ENCODE measurements at regions of chr1 and their contacts with region 1.

Region 1: DNA sequence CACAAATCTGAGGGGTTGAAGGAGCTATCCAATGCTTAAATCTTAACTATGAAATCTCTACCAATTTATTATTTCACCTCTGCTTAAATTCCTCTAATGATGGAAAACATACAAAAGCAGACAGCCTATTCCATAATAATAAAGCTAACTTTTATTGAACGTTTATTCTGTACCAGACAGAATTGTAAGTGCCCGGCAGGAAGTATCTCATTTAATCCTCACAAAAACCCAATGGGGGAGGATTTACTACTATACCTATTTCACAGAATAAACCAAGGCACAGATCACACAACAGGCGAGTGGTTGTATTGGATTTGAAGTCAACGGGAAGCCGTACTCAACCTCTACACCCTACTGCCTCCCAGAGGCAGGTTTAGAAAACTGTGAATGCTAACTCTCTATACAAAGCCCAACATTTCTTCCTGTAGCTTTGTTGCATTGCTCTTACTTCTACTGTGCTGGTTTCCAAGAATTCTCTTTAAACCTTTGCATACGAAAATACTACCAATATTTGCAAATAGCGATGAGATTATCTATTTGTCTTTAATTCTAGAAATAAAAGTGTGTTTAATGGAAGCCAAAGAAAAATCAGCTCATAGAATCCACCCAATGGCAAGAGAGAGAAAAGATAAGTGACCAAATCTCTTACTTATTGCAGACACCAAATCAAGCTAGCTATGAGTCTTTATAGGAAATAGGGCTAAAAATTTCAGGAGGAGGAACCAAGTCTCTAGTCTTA is 33.5 kb upstream of the C1orf53 start:
- DNase-seq: peak in 7 of 9 donors; percentile 17 to 62 (median 41)
- ATAC-seq: peak; percentile 86
- H3K4me3 ChIP-seq: no peak overlapping the region
- H3K4me3 Mint-ChIP-seq: no peak overlapping the region
- H3K27ac ChIP-seq: no peak overlapping the region
- H3K27ac Mint-ChIP-seq: no peak overlapping the region
- H3K4me1 ChIP-seq: no peaks in the 10 kb centered on the region
- H3K4me1 Mint-ChIP-seq: peaks cover 0 to 2% (median 0%) of the 10 kb centered on the region in 7 donors
- H3K27me3 ChIP-seq: no peaks in the 10 kb centered on the region
- H3K27me3 Mint-ChIP-seq: peaks cover 0 to 27% (median 0%) of the 10 kb centered on the region in 5 donors

Region 2: DNA sequence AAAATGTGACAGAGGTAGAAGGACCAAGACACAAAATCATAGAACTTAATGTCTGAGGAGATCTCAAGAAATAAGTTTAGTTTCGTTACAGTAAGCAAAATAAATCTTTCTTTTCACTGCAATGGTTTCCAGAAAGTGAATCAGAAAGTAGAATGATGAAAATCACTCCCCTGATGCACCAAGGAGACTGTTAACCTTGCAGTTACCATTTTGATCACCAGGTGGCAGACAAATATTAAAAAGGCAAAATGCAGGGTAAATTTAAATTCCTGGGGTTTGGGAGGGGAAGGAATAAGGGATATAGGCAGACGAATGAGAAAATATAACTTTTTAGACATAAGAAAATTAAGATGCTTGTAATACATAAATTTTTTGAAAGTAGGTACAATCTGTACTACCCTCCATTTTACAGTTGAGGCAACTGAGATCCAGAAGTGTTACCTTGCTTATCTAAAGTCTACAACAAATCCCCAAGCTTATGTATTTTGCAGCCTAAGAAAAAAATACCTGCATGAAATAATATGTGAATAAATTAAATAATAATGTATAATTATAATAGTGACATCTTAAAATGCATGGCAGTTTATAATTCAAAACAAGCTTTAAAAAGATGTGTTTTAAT is 347.7 kb before region 1 on chr1:
- CTCF ChIA-PET with region 1: interaction called, 15 read pairs
- POLR2A ChIA-PET with region 1: no interaction called
- intact Hi-C with region 1: loop called (anchors 1 kb)
- DNase-seq: peak in 7 of 9 donors; percentile 2 to 34 (median 24)
- ATAC-seq: no peak
- H3K4me3 ChIP-seq: no peak overlapping the region
- H3K4me3 Mint-ChIP-seq: no peak overlapping the region
- H3K27ac ChIP-seq: no peak overlapping the region
- H3K27ac Mint-ChIP-seq: no peak overlapping the region
- H3K4me1 ChIP-seq: no peaks in the 10 kb centered on the region
- H3K4me1 Mint-ChIP-seq: peaks cover 0 to 5% (median 0%) of the 10 kb centered on the region in 7 donors
- H3K27me3 ChIP-seq: no peaks in the 10 kb centered on the region
- H3K27me3 Mint-ChIP-seq: no peaks in the 10 kb centered on the region

Region 3: DNA sequence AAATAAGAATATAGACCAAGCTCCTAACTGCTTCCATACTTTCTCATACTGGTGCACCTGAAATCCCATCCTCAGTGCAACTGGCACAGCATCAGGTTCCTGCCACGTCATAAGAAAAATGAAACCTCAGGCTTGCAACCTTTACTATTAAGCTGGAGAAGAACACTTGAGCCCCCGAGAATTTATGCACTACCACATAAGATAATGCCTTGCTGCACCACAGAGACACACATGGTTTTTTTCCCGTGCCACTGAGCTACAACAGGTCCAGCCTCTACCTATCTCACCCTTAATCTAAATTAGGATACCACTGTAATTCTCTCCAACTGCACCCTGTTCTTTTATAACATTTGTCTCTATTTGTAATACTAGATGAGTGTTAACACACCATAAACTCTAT is 268.2 kb before region 1 on chr1:
- CTCF ChIA-PET with region 1: no interaction called
- POLR2A ChIA-PET with region 1: no interaction called
- intact Hi-C with region 1: no loop called
- DNase-seq: no peak
- ATAC-seq: no peak
- H3K4me3 ChIP-seq: no peak overlapping the region
- H3K4me3 Mint-ChIP-seq: no peak overlapping the region
- H3K27ac ChIP-seq: no peak overlapping the region
- H3K27ac Mint-ChIP-seq: no peak overlapping the region
- H3K4me1 ChIP-seq: no peaks in the 10 kb centered on the region
- H3K4me1 Mint-ChIP-seq: peaks cover 0 to 3% (median 0%) of the 10 kb centered on the region in 7 donors
- H3K27me3 ChIP-seq: no peaks in the 10 kb centered on the region
- H3K27me3 Mint-ChIP-seq: no peaks in the 10 kb centered on the region

Region 4: GRCh38 chr1:197614916-197615692 is 253.8 kb before region 1 on chr1:
- CTCF ChIA-PET with region 1: interaction called, 26 read pairs
- POLR2A ChIA-PET with region 1: no interaction called
- intact Hi-C with region 1: loop called (anchors 1 kb)
- DNase-seq: peak in 5 of 9 donors; percentile 0 to 27 (median 8)
- ATAC-seq: peak; percentile 55
- H3K4me3 ChIP-seq: no peak overlapping the region
- H3K4me3 Mint-ChIP-seq: no peak overlapping the region
- H3K27ac ChIP-seq: no peak overlapping the region
- H3K27ac Mint-ChIP-seq: peak overlapping the region in 1 of 9 donors; percentile 65
- H3K4me1 ChIP-seq: no peaks in the 10 kb centered on the region
- H3K4me1 Mint-ChIP-seq: peaks cover 0 to 4% (median 0%) of the 10 kb centered on the region in 7 donors
- H3K27me3 ChIP-seq: no peaks in the 10 kb centered on the region
- H3K27me3 Mint-ChIP-seq: no peaks in the 10 kb centered on the region

Region 5: DNA sequence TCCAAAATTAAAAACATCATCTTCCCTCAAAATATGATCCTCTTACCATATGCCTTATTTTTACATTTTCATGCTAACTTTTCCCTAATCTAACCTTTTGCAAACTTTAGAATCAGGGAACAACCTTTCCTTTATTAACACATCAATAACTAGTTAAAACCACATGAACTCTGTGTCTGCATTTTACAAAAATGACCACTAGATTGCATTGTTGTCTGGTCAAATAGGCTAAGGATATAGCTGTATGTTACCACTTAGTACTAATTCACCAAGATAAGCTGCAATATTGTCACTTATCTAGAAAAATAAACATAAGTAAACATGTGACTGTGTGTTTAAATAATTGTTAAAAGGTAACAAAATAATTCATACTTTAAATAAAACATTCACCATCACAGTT is 176.0 kb before region 1 on chr1:
- CTCF ChIA-PET with region 1: no interaction called
- POLR2A ChIA-PET with region 1: no interaction called
- intact Hi-C with region 1: loop called in 1 of 2 experiments (anchors 2 kb)
- DNase-seq: no peak
- ATAC-seq: no peak
- H3K4me3 ChIP-seq: no peak overlapping the region
- H3K4me3 Mint-ChIP-seq: no peak overlapping the region
- H3K27ac ChIP-seq: no peak overlapping the region
- H3K27ac Mint-ChIP-seq: no peak overlapping the region
- H3K4me1 ChIP-seq: peaks cover 0 to 9% of the 10 kb centered on the region in 2 donors
- H3K4me1 Mint-ChIP-seq: peaks cover 0 to 47% (median 33%) of the 10 kb centered on the region in 7 donors
- H3K27me3 ChIP-seq: no peaks in the 10 kb centered on the region
- H3K27me3 Mint-ChIP-seq: no peaks in the 10 kb centered on the region

Region 6: DNA sequence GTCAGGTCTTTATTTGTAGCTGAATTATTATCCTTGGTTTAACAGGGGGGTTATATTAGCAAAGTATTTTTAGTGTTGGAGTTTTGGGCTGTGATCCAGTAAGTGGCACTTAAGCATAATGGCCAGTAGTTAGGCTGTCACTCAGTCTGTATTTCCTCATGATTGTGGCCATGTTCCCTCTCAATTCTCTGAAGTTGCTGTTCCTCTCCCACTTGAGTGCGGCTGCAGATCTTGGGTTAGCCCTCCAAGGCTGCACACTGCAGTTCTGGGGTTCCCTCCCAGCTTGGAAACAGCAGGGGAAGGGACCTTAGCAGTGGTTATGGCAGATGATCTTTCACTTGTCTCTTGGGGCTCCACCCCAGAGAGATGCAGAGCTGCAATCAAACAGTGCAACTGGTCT is 70.4 kb before region 1 on chr1:
- CTCF ChIA-PET with region 1: no interaction called
- POLR2A ChIA-PET with region 1: no interaction called
- intact Hi-C with region 1: no loop called
- DNase-seq: no peak
- ATAC-seq: no peak
- H3K4me3 ChIP-seq: no peak overlapping the region
- H3K4me3 Mint-ChIP-seq: no peak overlapping the region
- H3K27ac ChIP-seq: no peak overlapping the region
- H3K27ac Mint-ChIP-seq: no peak overlapping the region
- H3K4me1 ChIP-seq: no peaks in the 10 kb centered on the region
- H3K4me1 Mint-ChIP-seq: no peaks in the 10 kb centered on the region
- H3K27me3 ChIP-seq: no peaks in the 10 kb centered on the region
- H3K27me3 Mint-ChIP-seq: peaks cover 3 to 22% (median 9%) of the 10 kb centered on the region in 5 donors

Region 7: DNA sequence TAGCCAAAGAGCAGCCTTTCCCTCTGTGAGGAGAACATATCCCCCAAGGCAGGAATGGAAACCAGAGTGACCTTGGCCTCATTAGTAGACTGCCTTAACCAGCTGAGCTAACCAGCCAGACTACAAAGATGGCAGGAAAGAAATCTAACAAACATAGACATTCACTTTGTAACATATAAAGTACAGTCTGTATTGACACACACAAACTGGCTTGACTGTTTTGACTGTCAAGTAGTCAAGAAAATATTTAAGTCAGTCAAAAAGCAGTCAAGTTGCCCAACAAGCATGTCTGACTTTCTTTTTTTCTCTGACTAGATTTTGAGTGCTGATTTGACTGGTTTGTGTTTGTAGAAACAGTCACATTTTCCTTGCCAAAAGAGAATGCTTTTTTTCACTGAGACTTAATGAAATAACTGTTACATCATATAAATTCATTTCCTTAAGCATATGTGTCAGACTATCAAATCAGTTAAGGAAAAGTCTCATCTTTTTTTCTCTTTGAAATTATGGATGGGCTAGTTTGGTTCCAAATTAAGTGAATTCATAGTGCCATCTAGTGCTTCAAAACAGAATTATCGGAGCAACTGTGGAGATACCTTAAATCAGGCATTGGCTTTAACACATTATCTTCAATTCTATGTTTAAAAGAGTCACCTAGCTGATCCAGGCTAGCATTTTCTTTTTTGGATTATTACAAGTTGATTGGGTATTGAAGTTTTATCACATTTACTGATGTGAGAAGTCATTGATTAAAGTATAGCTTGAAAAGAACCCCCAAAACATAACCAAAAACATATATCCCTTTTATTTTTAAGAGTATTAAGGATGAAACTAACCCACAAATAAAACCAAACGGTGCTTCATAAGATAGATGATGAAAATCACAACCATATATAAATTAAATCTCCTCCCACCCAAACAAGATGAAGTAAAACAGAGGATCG is 596.6 kb after region 1 on chr1:
- CTCF ChIA-PET with region 1: no interaction called
- POLR2A ChIA-PET with region 1: no interaction called
- intact Hi-C with region 1: loop called (anchors 1 kb)
- DNase-seq: peak in 6 of 9 donors; percentile 3 to 57 (median 40)
- ATAC-seq: peak; percentile 71
- H3K4me3 ChIP-seq: no peak overlapping the region
- H3K4me3 Mint-ChIP-seq: no peak overlapping the region
- H3K27ac ChIP-seq: no peak overlapping the region
- H3K27ac Mint-ChIP-seq: no peak overlapping the region
- H3K4me1 ChIP-seq: no peaks in the 10 kb centered on the region
- H3K4me1 Mint-ChIP-seq: peaks cover 0 to 5% (median 0%) of the 10 kb centered on the region in 7 donors
- H3K27me3 ChIP-seq: no peaks in the 10 kb centered on the region
- H3K27me3 Mint-ChIP-seq: no peaks in the 10 kb centered on the region

Measured in naive thymus-derived CD4-positive, alpha-beta T cell (primary cell).